ENCODE measurements at regions of chr3 and their contacts with region 1.

Region 1: GRCh38 chr3:192917404-192918274 is at the start of gene MB21D2:
- DNase-seq: peak; percentile 83
- ATAC-seq: peak; percentile 72
- H3K4me3 ChIP-seq: peak within 1 kb of the TSS; percentile 99
- H3K27ac ChIP-seq: peak within 1 kb of the TSS; percentile 89
- H3K4me1 ChIP-seq: peaks cover 28% of the 10 kb centered on the region
- H3K27me3 ChIP-seq: no peaks in the 10 kb centered on the region
- CTCF ChIP-seq: no peak
- total RNA-seq, gene MB21D2: 22.5 and 26.0 TPM in 2 replicates

Region 2: GRCh38 chr3:192566706-192567290 is 350.8 kb before region 1 on chr3:
- CTCF ChIA-PET with region 1: no interaction called
- POLR2A ChIA-PET with region 1: no interaction called
- intact Hi-C with region 1: loop called (anchors 5 kb)
- DNase-seq: peak; percentile 85
- ATAC-seq: peak; percentile 91
- H3K4me3 ChIP-seq: no peak overlapping the region
- H3K27ac ChIP-seq: no peak overlapping the region
- H3K4me1 ChIP-seq: 0 out of 2 replicates have a peak, but pooled peaks cover 4% of the 10 kb centered on the region
- H3K27me3 ChIP-seq: peaks cover 22% of the 10 kb centered on the region
- CTCF ChIP-seq: peak; percentile 80

Region 3: GRCh38 chr3:192772240-192772894 is 145.3 kb before region 1 on chr3:
- CTCF ChIA-PET with region 1: no interaction called
- POLR2A ChIA-PET with region 1: no interaction called
- intact Hi-C with region 1: no loop called
- DNase-seq: peak; percentile 70
- ATAC-seq: peak; percentile 100
- H3K4me3 ChIP-seq: no peak overlapping the region
- H3K27ac ChIP-seq: no peak overlapping the region
- H3K4me1 ChIP-seq: no peaks in the 10 kb centered on the region
- H3K27me3 ChIP-seq: peaks cover 18% of the 10 kb centered on the region
- CTCF ChIP-seq: peak; percentile 88

Region 4: GRCh38 chr3:192884777-192885773 is 32.6 kb before region 1 on chr3:
- CTCF ChIA-PET with region 1: interaction called, 9 read pairs
- POLR2A ChIA-PET with region 1: interaction called, 8 read pairs
- intact Hi-C with region 1: loop called (anchors 1 kb)
- DNase-seq: peak; percentile 92
- ATAC-seq: peak; percentile 48
- H3K4me3 ChIP-seq: no peak overlapping the region
- H3K27ac ChIP-seq: peak overlapping the region; percentile 98
- H3K4me1 ChIP-seq: peaks cover 91% of the 10 kb centered on the region
- H3K27me3 ChIP-seq: no peaks in the 10 kb centered on the region
- CTCF ChIP-seq: no peak

Region 5: GRCh38 chr3:192929755-192930547 is 12.3 kb after region 1 on chr3:
- CTCF ChIA-PET with region 1: no interaction called
- POLR2A ChIA-PET with region 1: no interaction called
- intact Hi-C with region 1: loop called (anchors 1 kb)
- DNase-seq: no peak
- ATAC-seq: no peak
- H3K4me3 ChIP-seq: no peak overlapping the region
- H3K27ac ChIP-seq: peak overlapping the region; percentile 79
- H3K4me1 ChIP-seq: peaks cover 46% of the 10 kb centered on the region
- H3K27me3 ChIP-seq: no peaks in the 10 kb centered on the region
- CTCF ChIP-seq: no peak

Region 6: DNA sequence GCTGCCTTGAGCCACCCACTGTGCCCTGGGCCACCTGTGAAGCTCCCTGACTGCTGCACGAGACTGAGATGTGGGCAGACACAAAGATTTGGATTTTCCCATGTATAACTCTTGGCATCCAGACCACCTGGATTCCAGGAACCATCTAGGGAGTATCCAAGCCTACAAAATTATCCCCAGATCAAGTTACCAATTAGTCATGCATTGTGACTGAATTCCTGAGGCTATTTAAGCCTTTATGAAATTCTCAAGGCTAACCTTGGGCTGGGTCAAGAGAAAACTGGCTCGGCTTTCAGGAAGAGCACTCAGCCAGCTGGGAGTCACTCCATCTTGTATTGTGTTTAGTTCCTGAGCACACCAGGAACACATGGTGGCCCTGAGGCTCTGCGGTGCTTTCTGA is 474.3 kb after region 1 on chr3:
- CTCF ChIA-PET with region 1: no interaction called
- POLR2A ChIA-PET with region 1: interaction called, 11 read pairs
- intact Hi-C with region 1: no loop called
- DNase-seq: peak; percentile 58
- ATAC-seq: no peak
- H3K4me3 ChIP-seq: no peak overlapping the region
- H3K27ac ChIP-seq: no peak overlapping the region
- H3K4me1 ChIP-seq: no peaks in the 10 kb centered on the region
- H3K27me3 ChIP-seq: peaks cover 32% of the 10 kb centered on the region
- CTCF ChIP-seq: no peak

Measured in PC-3 (cell line).